Common myeloid progenitor, CD34-positive (primary cell): ENCODE measurements at regions of chr1 and their contacts with region 1.

Region 1: GRCh38 chr1:155017041-155017945 is 14.7 kb downstream of the ZBTB7B start:
- DNase-seq: peak; percentile 91 to 94 (median 94)
- H3K4me3 ChIP-seq: peak overlapping the region; percentile 4 to 68 (median 41)
- H3K27ac ChIP-seq: peak overlapping the region in 1 of 2 experiments; percentile 68
- H3K4me1 ChIP-seq: peaks cover 0 to 58% (median 48%) of the 10 kb centered on the region in 4 experiments
- H3K27me3 ChIP-seq: no peaks in the 10 kb centered on the region

Region 2: GRCh38 chr1:154955718-154956543 is 61.4 kb before region 1 on chr1 and contains the start of gene PBXIP1:
- CTCF ChIA-PET with region 1: interaction called, 36 read pairs
- POLR2A ChIA-PET with region 1: interaction called, 6 read pairs
- DNase-seq: peak; percentile 94 to 96 (median 94)
- H3K4me3 ChIP-seq: peak within 1 kb of the TSS; percentile 33 to 92 (median 81)
- H3K27ac ChIP-seq: peak within 1 kb of the TSS; percentile 100
- H3K4me1 ChIP-seq: peaks cover 29 to 74% (median 69%) of the 10 kb centered on the region in 4 experiments
- H3K27me3 ChIP-seq: no peaks in the 10 kb centered on the region

Region 3: GRCh38 chr1:154988120-154988957 is 29.0 kb before region 1 on chr1:
- CTCF ChIA-PET with region 1: interaction called, 233 read pairs
- POLR2A ChIA-PET with region 1: no interaction called
- DNase-seq: peak in 1 of 3 donors; percentile 32
- H3K4me3 ChIP-seq: no peak overlapping the region
- H3K27ac ChIP-seq: no peak overlapping the region
- H3K4me1 ChIP-seq: peaks cover 4 to 21% (median 12%) of the 10 kb centered on the region in 4 experiments
- H3K27me3 ChIP-seq: no peaks in the 10 kb centered on the region

Region 4: DNA sequence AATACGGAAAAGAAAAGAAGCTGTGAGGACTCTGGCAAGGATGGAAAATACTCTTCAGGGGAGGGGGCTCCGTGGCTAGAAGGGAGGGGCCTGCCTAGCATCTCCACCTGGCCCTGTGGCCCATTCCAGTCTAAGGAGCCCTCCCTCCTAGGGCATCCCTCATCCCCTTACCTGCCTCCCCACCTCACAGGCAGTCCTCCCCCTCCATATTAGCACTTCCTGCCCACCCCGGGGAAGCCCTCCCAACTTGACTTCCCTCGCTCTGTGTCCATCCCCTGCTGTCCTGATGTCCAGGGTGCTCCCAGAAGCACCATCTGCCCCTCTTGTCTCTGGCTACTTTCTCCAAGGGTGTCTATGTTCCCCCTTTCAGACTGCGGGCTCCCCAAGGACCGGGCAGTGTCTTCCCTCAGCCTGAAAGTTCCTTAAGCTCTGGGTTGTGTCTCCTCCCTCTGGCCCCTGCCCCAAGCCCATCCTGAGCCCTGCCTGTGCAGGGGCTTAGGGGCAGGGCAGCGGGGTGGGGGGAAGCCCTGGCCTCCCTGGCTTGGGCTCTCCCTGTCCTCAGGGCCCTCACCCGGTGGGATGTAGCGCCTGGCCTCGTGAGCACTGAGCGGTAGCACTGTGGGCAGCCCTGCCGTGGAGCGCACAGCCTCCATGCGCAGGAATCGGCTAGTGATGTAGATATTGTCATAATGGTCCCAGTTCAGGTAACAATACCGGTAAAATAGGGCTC is 12.4 kb after region 1 on chr1:
- CTCF ChIA-PET with region 1: interaction called, 29 read pairs
- POLR2A ChIA-PET with region 1: no interaction called
- DNase-seq: no peak
- H3K4me3 ChIP-seq: no peak overlapping the region
- H3K27ac ChIP-seq: no peak overlapping the region
- H3K4me1 ChIP-seq: peaks cover 0 to 1% (median 0%) of the 10 kb centered on the region in 4 experiments
- H3K27me3 ChIP-seq: no peaks in the 10 kb centered on the region

Region 5: DNA sequence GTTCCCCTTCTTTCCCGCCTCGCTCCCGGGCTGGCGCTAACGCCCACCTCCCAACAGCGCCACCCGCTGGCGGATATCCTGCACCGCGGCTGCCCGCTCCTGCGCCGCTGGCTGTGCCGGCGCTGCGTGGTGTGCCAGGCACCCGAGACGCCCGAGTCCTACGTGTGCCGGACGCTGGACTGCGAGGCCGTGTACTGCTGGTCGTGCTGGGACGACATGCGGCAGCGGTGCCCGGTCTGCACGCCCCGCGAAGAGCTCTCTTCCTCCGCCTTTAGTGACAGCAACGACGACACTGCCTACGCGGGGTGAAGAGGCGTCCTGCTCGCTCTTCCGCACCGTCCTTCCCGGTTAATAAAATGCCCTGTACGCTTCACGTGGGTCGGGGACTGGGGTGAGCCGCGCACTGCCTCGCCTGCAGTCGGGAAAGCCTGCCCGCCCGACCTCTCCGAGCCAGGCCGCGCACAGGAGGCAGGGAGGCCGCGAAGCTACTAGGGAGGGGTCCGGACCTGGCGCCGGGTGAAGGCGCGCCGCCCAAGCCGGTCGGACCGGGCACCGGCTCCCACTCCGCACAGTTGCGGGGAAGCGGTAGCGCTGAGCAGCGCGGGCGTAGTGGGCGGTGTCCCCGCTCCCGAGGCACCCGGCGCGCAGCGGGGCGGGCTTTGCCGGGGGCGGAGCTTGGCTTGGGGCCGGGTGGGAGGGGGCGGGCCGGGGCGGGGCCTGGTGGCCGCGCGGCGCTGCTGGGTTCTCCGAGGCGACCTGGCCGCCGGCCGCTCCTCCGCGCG is 33.5 kb after region 1 on chr1 and contains the start of gene ADAM15:
- CTCF ChIA-PET with region 1: interaction called, 159 read pairs
- POLR2A ChIA-PET with region 1: interaction called, 3 read pairs
- DNase-seq: peak; percentile 55 to 81 (median 72)
- H3K4me3 ChIP-seq: peak within 1 kb of the TSS; percentile 45 to 88 (median 79)
- H3K27ac ChIP-seq: peak within 1 kb of the TSS; percentile 8 to 43
- H3K4me1 ChIP-seq: peaks cover 3 to 43% (median 40%) of the 10 kb centered on the region in 4 experiments
- H3K27me3 ChIP-seq: no peaks in the 10 kb centered on the region

Region 6: GRCh38 chr1:155105604-155106022 is 88.3 kb after region 1 on chr1:
- CTCF ChIA-PET with region 1: no interaction called
- POLR2A ChIA-PET with region 1: no interaction called
- DNase-seq: no peak
- H3K4me3 ChIP-seq: no peak overlapping the region
- H3K27ac ChIP-seq: no peak overlapping the region
- H3K4me1 ChIP-seq: peaks cover 0 to 22% (median 16%) of the 10 kb centered on the region in 4 experiments
- H3K27me3 ChIP-seq: no peaks in the 10 kb centered on the region

Region 7: DNA sequence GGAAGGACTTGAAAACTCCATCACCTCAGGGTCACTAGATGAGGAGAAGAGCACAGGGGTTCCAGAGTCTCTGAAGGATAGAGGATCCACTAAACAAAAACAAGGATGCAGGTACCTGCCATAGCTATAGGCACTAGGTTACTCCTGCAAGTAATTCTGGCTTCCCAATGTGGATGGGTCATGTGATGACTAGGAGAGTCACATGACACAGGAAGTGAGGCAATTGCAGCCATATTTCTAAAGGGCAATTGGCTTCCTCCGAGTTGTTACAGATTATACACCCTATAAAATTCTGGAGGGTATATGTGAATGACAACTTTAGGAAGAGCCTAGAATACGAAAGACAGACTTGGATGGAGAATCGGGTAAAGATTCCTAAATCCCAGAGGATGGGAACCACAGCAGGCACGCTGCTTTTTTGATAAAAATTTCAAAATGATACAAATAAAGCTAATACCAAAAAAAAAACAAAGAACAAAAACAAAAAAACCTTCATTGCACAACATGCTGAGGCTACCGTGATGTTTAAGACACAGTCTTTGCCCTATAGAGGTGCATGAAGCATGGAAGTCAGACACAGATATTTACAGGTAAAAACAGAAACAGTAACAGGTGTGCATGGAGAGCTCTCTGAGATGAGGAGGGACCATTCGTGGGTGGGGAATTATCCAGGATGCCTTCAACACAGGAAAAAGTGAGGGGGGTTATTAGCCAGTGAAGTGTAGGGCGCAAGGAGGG is 201.7 kb after region 1 on chr1:
- CTCF ChIA-PET with region 1: no interaction called
- POLR2A ChIA-PET with region 1: no interaction called
- DNase-seq: peak; percentile 38 to 77 (median 73)
- H3K4me3 ChIP-seq: peak overlapping the region in 5 of 7 experiments; percentile 13 to 58 (median 28)
- H3K27ac ChIP-seq: peak overlapping the region in 1 of 2 experiments; percentile 43
- H3K4me1 ChIP-seq: peaks cover 13 to 33% (median 21%) of the 10 kb centered on the region in 4 experiments
- H3K27me3 ChIP-seq: no peaks in the 10 kb centered on the region